MCF 10A (cell line): ENCODE measurements at regions of chr2 and their contacts with region 1.

Region 1: DNA sequence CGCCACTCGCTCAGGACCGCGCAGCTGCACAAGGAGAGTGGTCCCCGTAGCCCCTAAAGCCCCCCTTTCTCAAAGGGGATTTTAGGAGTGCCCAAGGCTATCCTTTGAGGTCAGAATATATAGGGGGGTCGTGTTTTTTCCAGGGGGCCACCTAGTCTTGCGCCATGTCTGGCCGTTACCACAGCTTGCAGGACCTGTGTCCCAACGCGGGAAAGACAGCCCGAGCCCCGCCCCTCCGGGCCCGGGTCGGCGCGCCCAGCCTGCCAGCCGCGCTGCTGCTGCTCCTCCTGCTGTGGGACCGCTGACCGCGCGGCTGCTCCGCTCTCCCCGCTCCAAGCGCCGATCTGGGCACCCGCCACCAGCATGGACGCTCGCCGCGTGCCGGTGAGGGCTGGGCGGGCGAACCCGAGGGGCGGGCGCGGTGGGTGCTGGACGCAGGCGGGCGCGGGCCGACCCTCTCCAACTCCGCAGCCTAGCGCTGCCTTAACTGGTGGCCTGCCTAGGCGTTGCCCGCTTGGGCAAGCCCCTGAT is at the start of gene CDCA7:
- DNase-seq: peak; percentile 74
- H3K4me3 Mint-ChIP-seq: peak within 1 kb of the TSS; percentile 88
- H3K27ac Mint-ChIP-seq: peak within 1 kb of the TSS; percentile 86
- H3K4me1 Mint-ChIP-seq: peaks cover 9% of the 10 kb centered on the region
- H3K27me3 Mint-ChIP-seq: peaks cover 25% of the 10 kb centered on the region
- CTCF ChIP-seq: no peak
- total RNA-seq, gene CDCA7: 6.2 and 14.0 TPM in 2 replicates

Region 2: GRCh38 chr2:173239644-173240043 is 115.0 kb before region 1 on chr2:
- CTCF ChIA-PET with region 1: no interaction called
- POLR2A ChIA-PET with region 1: no interaction called
- intact Hi-C with region 1: loop called (anchors 10 kb)
- DNase-seq: no peak
- H3K4me3 Mint-ChIP-seq: no peak overlapping the region
- H3K27ac Mint-ChIP-seq: no peak overlapping the region
- H3K4me1 Mint-ChIP-seq: no peaks in the 10 kb centered on the region
- H3K27me3 Mint-ChIP-seq: no peaks in the 10 kb centered on the region
- CTCF ChIP-seq: no peak